Activated CD8-positive, alpha-beta T cell treated with anti-CD3 and anti-CD28 coated beads for 36 hours (primary cell): ENCODE measurements at regions of chr1 and their contacts with region 1.

Region 1: GRCh38 chr1:23743287-23744052 is at the start of gene ELOA:
- DNase-seq: peak; percentile 82
- ATAC-seq: peak; percentile 96
- H3K4me3 Mint-ChIP-seq: peak within 1 kb of the TSS; percentile 82
- H3K27ac Mint-ChIP-seq: peak within 1 kb of the TSS; percentile 87
- H3K4me1 Mint-ChIP-seq: peaks cover 42% of the 10 kb centered on the region
- H3K27me3 Mint-ChIP-seq: no peaks in the 10 kb centered on the region
- CTCF ChIP-seq: no peak
- total RNA-seq, gene ELOA: 29.7 to 29.9 TPM

Region 2: GRCh38 chr1:23254584-23254983 is 488.9 kb before region 1 on chr1:
- CTCF ChIA-PET with region 1: no interaction called
- POLR2A ChIA-PET with region 1: no interaction called
- intact Hi-C with region 1: no loop called
- DNase-seq: no peak
- ATAC-seq: no peak
- H3K4me3 Mint-ChIP-seq: no peak overlapping the region
- H3K27ac Mint-ChIP-seq: no peak overlapping the region
- H3K4me1 Mint-ChIP-seq: no peaks in the 10 kb centered on the region
- H3K27me3 Mint-ChIP-seq: no peaks in the 10 kb centered on the region
- CTCF ChIP-seq: no peak

Region 3: GRCh38 chr1:23691499-23692307 is 51.8 kb before region 1 on chr1 and contains the start of gene RPL11:
- CTCF ChIA-PET with region 1: interaction called, 11 read pairs
- POLR2A ChIA-PET with region 1: interaction called, 31 read pairs
- intact Hi-C with region 1: loop called (anchors 5 kb)
- DNase-seq: peak; percentile 92
- ATAC-seq: peak; percentile 99
- H3K4me3 Mint-ChIP-seq: peak within 1 kb of the TSS; percentile 95
- H3K27ac Mint-ChIP-seq: peak within 1 kb of the TSS; percentile 98
- H3K4me1 Mint-ChIP-seq: peaks cover 42% of the 10 kb centered on the region
- H3K27me3 Mint-ChIP-seq: no peaks in the 10 kb centered on the region
- CTCF ChIP-seq: peak; percentile 76
- total RNA-seq, gene RPL11: 1,493 to 1,569 TPM

Region 4: GRCh38 chr1:23699280-23700179 is 43.9 kb before region 1 on chr1:
- CTCF ChIA-PET with region 1: interaction called, 6 read pairs
- POLR2A ChIA-PET with region 1: interaction called, 24 read pairs
- intact Hi-C with region 1: loop called (anchors 5 kb)
- DNase-seq: peak; percentile 57
- ATAC-seq: peak; percentile 78
- H3K4me3 Mint-ChIP-seq: no peak overlapping the region
- H3K27ac Mint-ChIP-seq: peak overlapping the region; percentile 71
- H3K4me1 Mint-ChIP-seq: peaks cover 56% of the 10 kb centered on the region
- H3K27me3 Mint-ChIP-seq: no peaks in the 10 kb centered on the region
- CTCF ChIP-seq: no peak

Region 5: DNA sequence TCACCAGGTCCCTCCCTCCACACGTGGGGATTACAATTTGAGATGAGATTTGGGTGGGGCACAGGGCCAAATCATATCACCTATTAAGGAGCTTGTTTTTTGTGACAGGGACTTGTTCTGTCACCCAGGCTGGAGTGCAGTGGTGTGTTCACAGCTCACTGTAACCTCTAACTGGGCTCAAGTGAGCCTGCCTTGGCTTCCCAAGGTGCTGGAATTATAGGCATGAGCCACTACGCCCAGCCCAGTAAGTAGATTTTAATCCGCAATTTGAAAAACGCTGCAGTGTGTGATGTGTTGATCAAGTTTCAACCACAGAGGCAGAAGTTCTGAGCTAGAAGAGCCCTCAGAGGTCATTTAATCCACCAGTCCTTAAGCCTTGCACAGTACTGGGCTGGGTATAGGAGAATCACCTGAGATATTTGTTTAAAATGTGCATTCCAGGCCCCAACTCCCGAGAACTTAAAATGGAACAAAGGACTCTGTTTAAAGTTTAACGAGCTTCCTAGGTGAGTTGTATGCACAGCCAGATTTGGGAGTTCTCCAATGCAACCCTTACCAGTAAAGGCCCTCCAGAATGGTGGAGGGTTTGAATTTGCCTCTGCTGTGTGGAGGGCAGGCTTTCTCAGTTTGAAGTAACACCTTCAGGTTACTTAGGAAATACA is 38.5 kb before region 1 on chr1:
- CTCF ChIA-PET with region 1: interaction called, 3 read pairs
- POLR2A ChIA-PET with region 1: interaction called, 4 read pairs
- intact Hi-C with region 1: loop called (anchors 5 kb)
- DNase-seq: no peak
- ATAC-seq: no peak
- H3K4me3 Mint-ChIP-seq: no peak overlapping the region
- H3K27ac Mint-ChIP-seq: no peak overlapping the region
- H3K4me1 Mint-ChIP-seq: peaks cover 20% of the 10 kb centered on the region
- H3K27me3 Mint-ChIP-seq: no peaks in the 10 kb centered on the region
- CTCF ChIP-seq: no peak

Region 6: GRCh38 chr1:23889074-23889473 is 145.6 kb after region 1 on chr1:
- CTCF ChIA-PET with region 1: no interaction called
- POLR2A ChIA-PET with region 1: no interaction called
- intact Hi-C with region 1: no loop called
- DNase-seq: no peak
- ATAC-seq: no peak
- H3K4me3 Mint-ChIP-seq: no peak overlapping the region
- H3K27ac Mint-ChIP-seq: no peak overlapping the region
- H3K4me1 Mint-ChIP-seq: no peaks in the 10 kb centered on the region
- H3K27me3 Mint-ChIP-seq: no peaks in the 10 kb centered on the region
- CTCF ChIP-seq: no peak